ENCODE measurements at regions of chr12 and their contacts with region 1.

Region 1: GRCh38 chr12:56461235-56462159 is 6.9 kb upstream of the SPRYD4 start:
- DNase-seq: no peak
- H3K4me3 ChIP-seq: no peak overlapping the region
- CTCF ChIP-seq: no peak

Region 2: DNA sequence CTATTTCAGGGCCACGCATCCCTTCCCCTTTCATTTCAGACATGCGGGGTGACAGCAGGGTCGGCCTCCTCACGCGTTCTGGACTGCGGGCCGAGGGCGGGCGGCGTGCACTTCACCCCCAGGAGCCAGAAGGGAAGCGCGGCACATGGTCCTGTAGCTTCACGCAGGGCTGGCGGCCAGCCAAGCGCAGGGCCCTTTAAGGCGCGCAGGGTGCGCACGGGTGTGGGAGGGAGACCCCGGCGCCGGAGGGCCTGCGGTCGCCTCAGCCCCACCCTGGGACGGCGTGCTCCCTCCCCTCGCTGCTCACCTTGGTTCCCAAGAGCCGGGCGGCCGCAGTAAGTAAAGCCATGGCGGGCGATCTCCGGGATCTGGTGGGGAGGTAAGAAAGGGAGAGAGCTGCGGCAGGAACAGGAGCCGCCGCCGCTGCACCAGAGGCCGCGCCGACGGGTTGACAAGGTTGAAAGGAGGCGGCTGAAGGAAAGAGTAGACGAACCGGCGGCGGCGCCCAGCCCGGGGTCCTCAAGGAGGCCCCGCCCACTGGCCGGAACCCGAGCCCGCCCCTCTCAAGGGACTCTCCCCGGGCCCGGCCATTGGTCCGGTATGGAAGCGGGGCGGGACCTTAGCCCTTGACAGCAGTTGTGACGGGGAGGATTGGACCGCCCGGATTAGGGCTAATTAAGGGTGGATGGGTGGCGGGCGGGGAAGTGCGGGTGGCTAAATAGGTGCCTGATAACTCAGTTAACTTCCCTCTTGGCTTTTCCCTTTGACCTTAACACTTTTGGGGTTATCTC is 161.4 kb before region 1 on chr12 and contains the start of gene CS:
- CTCF ChIA-PET with region 1: interaction called, 21 read pairs
- POLR2A ChIA-PET with region 1: interaction called, 4 read pairs
- DNase-seq: peak; percentile 67
- H3K4me3 ChIP-seq: peak within 1 kb of the TSS; percentile 93
- CTCF ChIP-seq: no peak

Region 3: DNA sequence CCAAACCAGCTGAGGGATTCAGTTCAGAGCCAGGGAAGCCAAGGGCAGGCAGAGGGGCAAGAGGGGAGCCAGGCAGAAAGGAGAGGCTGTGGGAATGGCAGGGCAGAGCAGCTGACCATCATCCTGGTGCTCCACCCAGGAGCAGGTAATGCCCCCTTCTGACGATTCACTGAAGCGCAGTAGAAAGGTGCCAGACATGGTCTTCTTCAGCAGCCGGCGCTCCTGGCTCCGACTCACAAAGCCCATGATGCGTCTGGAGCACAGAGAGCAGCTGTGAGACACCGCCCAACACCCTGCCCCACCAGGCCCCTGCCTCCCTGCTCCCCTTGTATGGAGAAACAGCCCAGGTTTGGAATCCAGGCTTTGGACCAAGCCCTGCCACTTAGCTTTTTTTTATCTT is 114.8 kb before region 1 on chr12:
- CTCF ChIA-PET with region 1: interaction called, 17 read pairs
- POLR2A ChIA-PET with region 1: no interaction called
- DNase-seq: no peak
- H3K4me3 ChIP-seq: no peak overlapping the region
- CTCF ChIP-seq: no peak

Region 4: GRCh38 chr12:56377310-56377988 is 84.0 kb before region 1 on chr12:
- CTCF ChIA-PET with region 1: interaction called, 10 read pairs
- POLR2A ChIA-PET with region 1: no interaction called
- DNase-seq: no peak
- H3K4me3 ChIP-seq: no peak overlapping the region
- CTCF ChIP-seq: no peak

Region 5: DNA sequence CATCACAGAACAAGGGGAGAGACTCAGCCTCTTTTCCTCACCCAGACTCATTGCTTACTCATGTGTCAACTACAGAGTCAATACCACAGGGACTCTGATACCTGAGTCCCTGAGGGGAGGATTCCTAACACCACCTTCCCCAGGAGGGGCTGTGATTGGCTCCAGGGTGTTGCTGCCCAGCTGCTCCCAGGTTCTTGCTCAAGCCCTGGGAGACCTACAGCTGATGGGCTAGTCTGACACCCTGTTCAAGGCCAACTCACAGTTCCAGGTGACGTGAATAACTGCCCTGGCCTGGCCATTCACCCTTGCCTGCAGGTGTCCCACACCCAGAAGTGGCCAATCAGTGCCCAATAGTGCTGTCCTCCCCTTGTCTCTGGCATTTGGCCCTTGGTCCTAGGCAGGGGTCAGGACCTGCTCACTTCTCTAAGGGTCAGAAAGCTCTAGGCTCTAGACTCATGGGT is 15.5 kb after region 1 on chr12:
- CTCF ChIA-PET with region 1: interaction called, 17 read pairs
- POLR2A ChIA-PET with region 1: no interaction called
- DNase-seq: no peak
- H3K4me3 ChIP-seq: no peak overlapping the region
- CTCF ChIP-seq: no peak

Measured in AG04449 (cell line).